ENCODE measurements at regions of chr3 and their contacts with region 1.

Region 1: DNA sequence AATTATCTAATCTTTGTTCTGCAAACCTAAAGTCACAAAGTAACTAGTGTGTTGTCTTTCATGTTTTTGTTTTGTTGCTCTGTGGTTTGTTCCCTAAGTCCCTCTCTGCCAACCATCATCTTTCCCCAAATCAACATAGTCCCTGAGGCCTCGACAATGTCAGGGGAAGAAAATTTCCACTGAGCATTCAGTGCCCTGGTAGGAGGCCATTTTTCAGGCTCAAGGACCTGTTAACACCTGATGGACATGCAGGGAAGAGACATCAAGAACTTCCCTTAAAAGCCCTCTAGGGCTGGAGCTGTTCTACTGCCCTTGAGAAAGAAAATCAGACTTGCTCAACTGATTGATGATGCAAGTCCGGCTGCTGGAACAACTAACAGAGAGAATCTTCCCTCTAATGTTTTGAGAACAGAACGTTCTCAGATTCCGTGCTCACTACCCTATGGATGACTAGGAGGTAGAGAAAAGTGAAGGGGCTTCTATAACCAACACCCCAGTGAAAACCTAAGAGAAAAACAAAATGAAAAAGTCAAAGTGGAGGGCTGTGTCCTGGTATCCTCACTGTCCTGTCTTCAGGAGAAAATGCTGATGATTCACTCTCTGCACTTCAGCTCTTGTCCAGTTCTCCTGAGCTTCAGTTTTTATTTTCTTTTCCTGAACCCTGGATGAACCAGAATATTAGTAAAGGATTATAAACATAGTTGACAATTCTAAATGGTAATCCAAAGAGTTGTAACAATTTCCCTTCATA is 373.1 kb downstream of the FOXP1 start:
- DNase-seq: peak; percentile 87
- ATAC-seq: peak; percentile 47
- H3K4me3 ChIP-seq: peak overlapping the region in 1 of 3 experiments; percentile 17; a peak in 1 of 6 replicates
- H3K27ac ChIP-seq: peak overlapping the region; percentile 99
- H3K4me1 ChIP-seq: peaks cover 69% of the 10 kb centered on the region
- H3K27me3 ChIP-seq: no peaks in the 10 kb centered on the region
- CTCF ChIP-seq: no peak
- EP300 ChIP-seq: peak in 1 of 2 experiments; percentile 66; a peak in 2 of 4 replicates
- POLR2A ChIP-seq: no peak
- RAD21 ChIP-seq: peak; percentile 19; the same call in 1 of the 2 replicates

Region 2: GRCh38 chr3:71087143-71088018 is 123.1 kb before region 1 on chr3:
- CTCF ChIA-PET with region 1: no interaction called
- POLR2A ChIA-PET with region 1: interaction called, 10 read pairs
- in situ Hi-C with region 1: no loop called
- intact Hi-C with region 1: no loop called
- DNase-seq: peak; percentile 83
- ATAC-seq: peak; percentile 62
- H3K4me3 ChIP-seq: peak overlapping the region in 2 of 3 experiments; percentile 10 to 11; a peak in 1 of 6 replicates
- H3K27ac ChIP-seq: peak overlapping the region; percentile 65
- H3K4me1 ChIP-seq: peaks cover 71% of the 10 kb centered on the region
- H3K27me3 ChIP-seq: no peaks in the 10 kb centered on the region
- CTCF ChIP-seq: no peak
- EP300 ChIP-seq: peak in 1 of 2 experiments; percentile 80; a peak in 2 of 4 replicates
- POLR2A ChIP-seq: no peak
- RAD21 ChIP-seq: no peak

Region 3: GRCh38 chr3:71149959-71150954 is 60.2 kb before region 1 on chr3:
- CTCF ChIA-PET with region 1: no interaction called
- POLR2A ChIA-PET with region 1: interaction called, 21 read pairs
- in situ Hi-C with region 1: loop called (anchors 5 kb)
- intact Hi-C with region 1: loop called (anchors 1 kb)
- DNase-seq: no peak
- ATAC-seq: no peak
- H3K4me3 ChIP-seq: no peak overlapping the region
- H3K27ac ChIP-seq: no peak overlapping the region
- H3K4me1 ChIP-seq: peaks cover 50% of the 10 kb centered on the region
- H3K27me3 ChIP-seq: no peaks in the 10 kb centered on the region
- CTCF ChIP-seq: no peak
- EP300 ChIP-seq: no peak
- POLR2A ChIP-seq: no peak
- RAD21 ChIP-seq: no peak

Region 4: GRCh38 chr3:71247221-71247976 is 37.0 kb after region 1 on chr3:
- CTCF ChIA-PET with region 1: no interaction called
- POLR2A ChIA-PET with region 1: interaction called, 85 read pairs
- in situ Hi-C with region 1: no loop called
- intact Hi-C with region 1: loop called (anchors 1 kb)
- DNase-seq: peak; percentile 68
- ATAC-seq: peak; percentile 46
- H3K4me3 ChIP-seq: 0 out of 6 replicates have a peak overlapping the region, but pooled peaks of 1 of the 3 experiments have one; percentile 8
- H3K27ac ChIP-seq: peak overlapping the region; percentile 37
- H3K4me1 ChIP-seq: peaks cover 90% of the 10 kb centered on the region
- H3K27me3 ChIP-seq: no peaks in the 10 kb centered on the region
- CTCF ChIP-seq: peak; percentile 38; the same call in 1 of the 2 replicates
- EP300 ChIP-seq: no peak
- POLR2A ChIP-seq: no peak
- RAD21 ChIP-seq: no peak

Region 5: GRCh38 chr3:71305231-71306206 is 95.1 kb after region 1 on chr3:
- CTCF ChIA-PET with region 1: no interaction called
- POLR2A ChIA-PET with region 1: interaction called, 5 read pairs
- in situ Hi-C with region 1: no loop called
- intact Hi-C with region 1: loop called (anchors 1 kb)
- DNase-seq: peak; percentile 70
- ATAC-seq: peak; percentile 87
- H3K4me3 ChIP-seq: peak overlapping the region; percentile 66 to 75 (median 74)
- H3K27ac ChIP-seq: peak overlapping the region; percentile 79
- H3K4me1 ChIP-seq: peaks cover 66% of the 10 kb centered on the region
- H3K27me3 ChIP-seq: no peaks in the 10 kb centered on the region
- CTCF ChIP-seq: no peak
- EP300 ChIP-seq: 0 out of 4 replicates have a peak, but pooled peaks of 1 of the 2 experiments have one; percentile 3
- POLR2A ChIP-seq: peak; percentile 21 to 52; a peak in 2 of 4 replicates
- RAD21 ChIP-seq: no peak

Region 6: DNA sequence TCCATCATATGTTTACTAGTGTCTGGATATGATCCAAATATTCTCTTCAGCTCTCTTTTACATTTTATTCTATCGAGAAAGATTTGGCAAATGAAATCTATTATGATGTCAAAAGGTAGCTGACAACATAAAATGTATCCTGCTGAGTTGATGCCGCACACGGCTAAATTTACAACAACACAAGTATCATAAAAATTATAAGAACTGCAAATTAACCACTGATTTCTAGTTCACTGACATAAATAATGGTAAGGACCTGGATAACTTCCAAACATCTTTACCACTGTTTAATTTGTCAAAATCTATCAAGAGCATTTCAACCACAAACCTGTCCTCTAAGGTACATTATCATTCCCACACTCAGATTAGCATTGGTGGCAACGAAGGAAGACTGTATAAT is 128.6 kb after region 1 on chr3:
- CTCF ChIA-PET with region 1: no interaction called
- POLR2A ChIA-PET with region 1: no interaction called
- in situ Hi-C with region 1: no loop called
- intact Hi-C with region 1: no loop called
- DNase-seq: no peak
- ATAC-seq: no peak
- H3K4me3 ChIP-seq: no peak overlapping the region
- H3K27ac ChIP-seq: no peak overlapping the region
- H3K4me1 ChIP-seq: no peaks in the 10 kb centered on the region
- H3K27me3 ChIP-seq: no peaks in the 10 kb centered on the region
- CTCF ChIP-seq: no peak
- EP300 ChIP-seq: no peak
- POLR2A ChIP-seq: no peak
- RAD21 ChIP-seq: no peak